OCI-LY7 (cell line): ENCODE measurements at regions of chr19 and their contacts with region 1.

Region 1: DNA sequence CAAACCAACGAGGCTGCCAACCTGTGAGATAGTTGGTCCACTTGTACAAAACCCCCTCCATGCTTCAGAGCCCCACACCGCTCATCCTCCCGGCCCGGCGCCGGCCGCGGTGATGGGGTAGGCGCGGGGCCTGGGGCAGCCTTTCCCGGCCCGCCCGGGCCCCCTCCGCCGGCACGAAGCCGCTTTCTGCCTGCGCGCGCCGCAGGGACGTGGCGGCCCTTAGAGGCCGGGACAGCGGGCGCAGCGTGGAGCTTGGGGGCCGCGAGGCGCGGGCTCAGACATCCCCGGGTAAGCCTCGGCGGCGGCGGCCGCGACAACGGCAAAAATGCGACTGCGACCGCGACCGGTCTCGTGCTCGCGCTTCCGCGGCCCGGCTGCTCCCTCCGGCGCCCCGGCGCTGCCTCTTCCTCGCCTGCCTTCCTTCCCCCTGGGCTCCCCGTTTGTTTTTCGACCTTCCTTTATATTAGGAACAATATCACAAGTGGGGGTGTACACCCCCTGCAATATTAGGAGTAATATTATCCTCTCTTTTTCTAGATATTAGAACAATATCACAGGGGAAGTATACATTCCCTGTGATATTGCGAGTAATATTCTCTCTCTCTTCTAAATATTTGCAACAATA is 53.9 kb upstream of the CEACAM21 start:
- DNase-seq: no peak
- H3K4me3 ChIP-seq: peak overlapping the region; percentile 46
- H3K27ac ChIP-seq: no peak overlapping the region
- H3K4me1 ChIP-seq: peaks cover 28% of the 10 kb centered on the region
- CTCF ChIP-seq: no peak

Region 2: GRCh38 chr19:41541990-41542584 is 20.0 kb after region 1 on chr19:
- CTCF ChIA-PET with region 1: no interaction called
- POLR2A ChIA-PET with region 1: no interaction called
- intact Hi-C with region 1: no loop called
- DNase-seq: peak; percentile 81
- H3K4me3 ChIP-seq: no peak overlapping the region
- H3K27ac ChIP-seq: no peak overlapping the region
- H3K4me1 ChIP-seq: peaks cover 64% of the 10 kb centered on the region
- CTCF ChIP-seq: peak; percentile 90

Region 3: DNA sequence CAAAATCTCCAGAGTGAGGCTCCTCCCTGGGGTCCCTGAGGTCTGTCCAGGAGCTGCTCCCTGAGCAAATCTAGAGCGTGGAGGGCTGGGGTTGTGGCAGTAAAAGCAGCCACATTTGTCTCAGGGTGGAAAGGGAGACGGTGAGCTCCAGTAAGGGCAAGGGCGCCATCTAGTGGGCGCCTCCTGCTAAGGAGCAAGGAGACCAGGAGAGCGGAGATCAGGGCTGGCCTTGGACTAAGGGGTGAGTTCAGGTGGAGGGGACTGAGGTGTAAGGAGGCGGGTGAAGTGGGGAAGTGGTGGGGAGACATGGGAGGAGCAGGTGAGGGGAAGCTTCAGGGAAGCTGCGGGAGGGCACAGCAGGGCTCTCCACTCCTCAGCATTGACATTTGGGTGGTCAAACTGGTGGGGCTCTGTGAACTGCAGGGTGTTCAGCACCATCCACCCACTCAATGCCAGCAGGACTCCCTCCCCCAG is 48.6 kb after region 1 on chr19:
- CTCF ChIA-PET with region 1: no interaction called
- POLR2A ChIA-PET with region 1: interaction called, 3 read pairs
- intact Hi-C with region 1: loop called (anchors 2 kb)
- DNase-seq: peak; percentile 87
- H3K4me3 ChIP-seq: no peak overlapping the region
- H3K27ac ChIP-seq: no peak overlapping the region
- H3K4me1 ChIP-seq: peaks cover 8% of the 10 kb centered on the region
- CTCF ChIP-seq: peak; percentile 98

Region 4: DNA sequence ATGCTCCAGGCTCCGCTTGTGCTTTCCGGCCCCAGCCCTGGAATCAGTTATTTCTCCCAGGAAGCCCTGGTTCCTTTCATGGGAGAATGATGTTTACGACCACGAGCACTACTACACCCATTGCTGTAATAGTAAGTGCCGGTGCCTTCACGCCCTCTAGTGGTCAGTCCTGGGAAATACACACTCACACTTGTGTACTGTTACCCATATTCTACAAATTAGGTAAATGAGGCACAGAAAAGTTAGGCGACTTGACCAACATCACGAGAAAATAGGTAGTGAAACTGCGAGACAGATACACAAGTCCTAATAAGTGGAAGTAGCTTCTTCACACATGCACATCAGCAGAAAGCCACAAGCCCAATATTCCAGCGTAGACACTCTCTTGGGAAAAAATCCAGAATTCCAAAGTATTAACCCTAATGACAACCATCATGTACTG is 75.6 kb after region 1 on chr19:
- CTCF ChIA-PET with region 1: no interaction called
- POLR2A ChIA-PET with region 1: no interaction called
- intact Hi-C with region 1: loop called (anchors 2 kb)
- DNase-seq: peak; percentile 81
- H3K4me3 ChIP-seq: no peak overlapping the region
- H3K27ac ChIP-seq: no peak overlapping the region
- H3K4me1 ChIP-seq: peaks cover 10% of the 10 kb centered on the region
- CTCF ChIP-seq: peak; percentile 99